Common myeloid progenitor, CD34-positive (primary cell): ENCODE measurements at regions of chr2 and their contacts with region 1.

Region 1: GRCh38 chr2:227471924-227472264 is at the start of gene AGFG1:
- DNase-seq: peak; percentile 72 to 84 (median 81)
- H3K4me3 ChIP-seq: peak within 1 kb of the TSS; percentile 43 to 95 (median 81)
- H3K27ac ChIP-seq: peak within 1 kb of the TSS; percentile 33 to 61
- H3K4me1 ChIP-seq: peaks cover 0 to 18% (median 9%) of the 10 kb centered on the region in 4 experiments
- H3K27me3 ChIP-seq: no peaks in the 10 kb centered on the region

Region 2: DNA sequence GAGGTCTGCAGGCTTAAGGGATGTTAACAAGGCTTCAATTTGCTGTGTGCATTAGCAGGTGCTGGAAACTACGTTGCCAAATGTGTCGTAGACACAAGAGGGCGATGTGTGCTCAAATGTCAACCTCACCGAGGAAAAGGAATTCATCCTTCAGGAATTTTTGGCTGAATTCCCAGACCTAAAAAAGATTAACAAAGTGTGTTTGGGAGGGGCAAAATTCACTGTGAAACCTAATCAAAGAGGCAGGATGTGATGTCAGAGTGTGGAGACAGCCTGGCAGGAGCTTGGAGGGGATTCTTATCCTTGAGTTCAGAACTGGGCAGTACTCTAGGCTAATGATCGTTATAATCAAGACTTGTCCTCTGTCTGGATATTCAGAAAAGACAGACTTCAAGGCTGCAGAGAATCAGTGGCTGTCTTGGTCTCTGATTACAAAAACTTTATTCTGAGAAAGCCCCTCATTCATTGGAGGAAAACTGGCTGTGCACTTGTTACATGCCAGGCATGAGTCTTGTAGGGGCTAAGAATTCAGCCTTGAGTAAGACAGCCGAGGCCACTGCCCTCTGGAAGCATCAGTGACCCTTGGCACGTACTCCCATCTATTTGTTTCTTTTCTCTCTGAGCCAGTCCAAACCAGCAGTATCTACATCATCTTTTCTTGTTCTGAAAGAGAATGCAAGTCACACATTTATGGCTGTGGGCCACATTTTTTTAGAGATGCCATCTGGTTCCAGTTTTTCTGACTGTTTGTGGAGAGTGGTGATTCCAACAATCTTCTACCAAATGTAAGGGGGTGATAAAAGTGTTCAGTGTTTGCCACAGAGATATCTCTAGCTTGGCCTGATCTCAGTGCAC is 65.5 kb before region 1 on chr2:
- CTCF ChIA-PET with region 1: interaction called, 14 read pairs
- POLR2A ChIA-PET with region 1: no interaction called
- DNase-seq: peak; percentile 60 to 93 (median 90)
- H3K4me3 ChIP-seq: peak overlapping the region in 1 of 7 experiments; percentile 50
- H3K27ac ChIP-seq: no peak overlapping the region
- H3K4me1 ChIP-seq: peaks cover 0 to 10% (median 7%) of the 10 kb centered on the region in 4 experiments
- H3K27me3 ChIP-seq: no peaks in the 10 kb centered on the region